A549 (cell line): ENCODE measurements at regions of chr6 and their contacts with region 1.

Region 1: GRCh38 chr6:26183581-26184366 is 96.5 kb downstream of the HFE start:
- DNase-seq: peak in 1 of 2 experiments; percentile 84
- ATAC-seq: peak; percentile 80 to 81
- H3K4me3 ChIP-seq: peak overlapping the region; percentile 43
- H3K27ac ChIP-seq: peak overlapping the region; percentile 58 to 87
- H3K4me1 ChIP-seq: peaks cover 13% of the 10 kb centered on the region; the same call in 2 of the 3 replicates
- CTCF ChIP-seq: no peak
- EP300 ChIP-seq: no peak
- POLR2A ChIP-seq: peak; percentile 44
- RAD21 ChIP-seq: no peak

Region 2: GRCh38 chr6:26172496-26172958 is 11.2 kb before region 1 on chr6:
- CTCF ChIA-PET with region 1: interaction called, 5 read pairs
- POLR2A ChIA-PET with region 1: interaction called, 16 read pairs
- DNase-seq: no peak
- ATAC-seq: peak; percentile 61 to 64; a peak in 4 of 6 replicates
- H3K4me3 ChIP-seq: peak overlapping the region; percentile 57
- H3K27ac ChIP-seq: peak overlapping the region; percentile 85 to 89
- H3K4me1 ChIP-seq: peaks cover 16% of the 10 kb centered on the region; the same call in 2 of the 3 replicates
- CTCF ChIP-seq: no peak
- EP300 ChIP-seq: no peak
- POLR2A ChIP-seq: no peak
- RAD21 ChIP-seq: no peak

Region 3: GRCh38 chr6:26196846-26197648 is 13.3 kb after region 1 on chr6:
- CTCF ChIA-PET with region 1: interaction called, 13 read pairs
- POLR2A ChIA-PET with region 1: interaction called, 14 read pairs
- DNase-seq: no peak
- ATAC-seq: no peak
- H3K4me3 ChIP-seq: no peak overlapping the region
- H3K27ac ChIP-seq: peak overlapping the region in 1 of 2 experiments; percentile 90; a peak in 3 of 6 replicates
- H3K4me1 ChIP-seq: no peaks in the 10 kb centered on the region; the same call in 2 of the 3 replicates
- CTCF ChIP-seq: no peak
- EP300 ChIP-seq: no peak
- POLR2A ChIP-seq: no peak
- RAD21 ChIP-seq: no peak

Region 4: DNA sequence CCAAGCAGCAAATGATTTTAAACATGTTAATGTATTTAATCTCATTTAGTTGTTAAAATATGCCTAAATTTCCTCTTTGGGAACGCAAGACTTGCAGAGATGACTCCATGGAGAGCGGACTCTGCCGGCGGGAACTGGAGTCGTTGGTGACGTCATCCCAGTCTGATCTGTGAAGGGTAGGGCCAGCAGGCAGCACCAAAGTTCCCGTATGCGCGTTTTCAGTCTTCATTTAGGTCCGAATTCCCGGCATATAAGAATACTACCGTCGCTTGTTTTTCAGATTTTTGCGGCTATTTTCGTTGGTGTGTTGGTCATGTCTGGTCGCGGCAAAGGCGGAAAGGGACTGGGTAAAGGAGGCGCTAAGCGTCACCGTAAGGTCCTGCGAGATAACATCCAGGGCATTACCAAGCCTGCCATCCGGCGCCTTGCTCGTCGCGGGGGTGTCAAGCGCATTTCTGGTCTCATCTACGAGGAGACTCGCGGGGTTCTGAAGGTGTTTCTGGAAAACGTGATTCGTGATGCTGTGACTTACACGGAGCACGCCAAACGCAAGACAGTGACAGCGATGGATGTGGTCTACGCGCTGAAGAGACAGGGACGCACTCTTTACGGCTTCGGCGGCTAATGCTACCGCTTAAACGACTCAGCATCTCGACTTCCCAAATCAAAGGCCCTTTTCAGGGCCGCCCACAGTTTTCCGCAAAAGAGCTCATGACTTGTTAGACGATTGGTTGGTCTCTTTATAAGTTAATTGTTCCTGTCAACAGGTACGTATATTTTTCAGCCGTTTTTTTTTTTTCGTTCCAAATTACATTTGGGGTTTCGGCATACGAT is 20.8 kb after region 1 on chr6:
- CTCF ChIA-PET with region 1: interaction called, 13 read pairs
- POLR2A ChIA-PET with region 1: interaction called, 14 read pairs
- DNase-seq: peak; percentile 92 to 97
- ATAC-seq: peak; percentile 83
- H3K4me3 ChIP-seq: peak overlapping the region; percentile 81
- H3K27ac ChIP-seq: peak overlapping the region; percentile 88 to 97
- H3K4me1 ChIP-seq: peaks cover 14% of the 10 kb centered on the region; the same call in 2 of the 3 replicates
- CTCF ChIP-seq: no peak
- EP300 ChIP-seq: peak; percentile 41 to 57; a peak in 2 of 5 replicates
- POLR2A ChIP-seq: peak; percentile 95
- RAD21 ChIP-seq: no peak

Region 5: DNA sequence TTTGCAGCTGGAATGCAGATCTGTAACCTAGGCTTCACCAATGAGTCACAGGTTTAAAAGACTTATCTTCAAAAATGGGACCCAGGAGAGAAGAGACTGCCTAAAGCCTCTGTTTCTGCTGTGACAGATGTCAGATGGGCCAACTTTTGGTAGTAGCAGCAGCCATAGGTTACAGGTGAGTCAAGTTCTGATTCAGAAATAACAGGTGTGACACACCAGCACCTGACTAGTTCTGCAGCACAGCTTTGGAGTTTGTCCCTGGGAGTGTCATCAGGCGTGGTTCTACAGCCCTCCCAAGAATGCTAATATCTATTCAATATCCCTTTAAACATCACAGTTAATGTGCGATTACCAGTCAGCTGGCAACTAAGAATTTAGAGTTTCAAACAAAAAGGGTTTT is 59.4 kb after region 1 on chr6:
- CTCF ChIA-PET with region 1: no interaction called
- POLR2A ChIA-PET with region 1: no interaction called
- DNase-seq: no peak
- ATAC-seq: no peak
- H3K4me3 ChIP-seq: no peak overlapping the region
- H3K27ac ChIP-seq: no peak overlapping the region
- H3K4me1 ChIP-seq: peaks cover 7% of the 10 kb centered on the region; the same call in 1 of the 3 replicates
- CTCF ChIP-seq: no peak
- EP300 ChIP-seq: no peak
- POLR2A ChIP-seq: no peak
- RAD21 ChIP-seq: no peak

Region 6: DNA sequence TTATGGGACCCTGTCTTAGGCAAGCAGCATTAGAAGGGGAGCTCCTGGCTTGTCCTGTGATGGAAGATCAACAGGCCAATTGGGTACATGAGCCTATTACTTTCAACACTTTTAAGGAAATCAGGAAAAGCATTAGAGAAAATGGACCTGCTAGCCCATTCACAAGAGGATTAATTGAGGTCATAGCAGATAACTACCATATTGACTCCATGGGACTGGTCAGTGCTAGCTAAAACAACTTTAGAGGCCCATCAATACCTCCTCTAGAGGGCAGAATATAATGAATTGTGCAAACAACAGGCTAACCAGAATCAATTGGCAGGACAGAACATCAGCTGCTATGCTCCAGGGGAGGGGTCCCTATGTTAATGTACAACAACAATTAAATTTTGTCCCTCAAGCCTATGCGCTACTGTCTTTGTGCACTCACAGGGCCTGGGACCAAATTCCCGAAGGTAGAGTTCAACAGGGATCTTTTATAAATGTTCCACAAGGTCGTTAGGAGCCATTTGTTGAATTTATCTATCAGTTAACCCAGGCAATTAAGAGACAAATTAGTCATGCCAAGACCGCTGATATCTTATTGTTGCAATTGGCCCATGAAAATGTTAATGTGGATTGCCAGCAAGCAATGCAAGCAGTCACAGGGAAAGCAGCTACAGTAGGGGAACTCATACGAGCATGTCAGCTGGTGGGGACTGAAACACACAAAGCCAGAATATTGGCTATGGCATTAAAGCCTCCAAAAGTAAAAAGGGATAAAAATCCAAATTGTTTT is 74.6 kb after region 1 on chr6:
- CTCF ChIA-PET with region 1: no interaction called
- POLR2A ChIA-PET with region 1: no interaction called
- DNase-seq: no peak
- ATAC-seq: no peak; a peak in 1 of 6 replicates
- H3K4me3 ChIP-seq: no peak overlapping the region
- H3K27ac ChIP-seq: no peak overlapping the region
- H3K4me1 ChIP-seq: no peaks in the 10 kb centered on the region
- CTCF ChIP-seq: no peak
- EP300 ChIP-seq: no peak
- POLR2A ChIP-seq: no peak
- RAD21 ChIP-seq: no peak

Region 7: GRCh38 chr6:26272171-26272637 is 88.4 kb after region 1 on chr6:
- CTCF ChIA-PET with region 1: no interaction called
- POLR2A ChIA-PET with region 1: interaction called, 13 read pairs
- DNase-seq: no peak
- ATAC-seq: no peak
- H3K4me3 ChIP-seq: peak overlapping the region; percentile 77; the same call in 1 of the 3 replicates
- H3K27ac ChIP-seq: peak overlapping the region; percentile 96 to 98
- H3K4me1 ChIP-seq: peaks cover 12% of the 10 kb centered on the region
- CTCF ChIP-seq: no peak
- EP300 ChIP-seq: no peak
- POLR2A ChIP-seq: no peak
- RAD21 ChIP-seq: no peak

Region 8: GRCh38 chr6:26285143-26286134 is 101.7 kb after region 1 on chr6:
- CTCF ChIA-PET with region 1: no interaction called
- POLR2A ChIA-PET with region 1: interaction called, 12 read pairs
- DNase-seq: peak; percentile 65 to 99
- ATAC-seq: peak; percentile 81 to 90
- H3K4me3 ChIP-seq: peak overlapping the region; percentile 64
- H3K27ac ChIP-seq: peak overlapping the region; percentile 93 to 94
- H3K4me1 ChIP-seq: peaks cover 34% of the 10 kb centered on the region
- CTCF ChIP-seq: no peak
- EP300 ChIP-seq: peak; percentile 37 to 63; a peak in 2 of 5 replicates
- POLR2A ChIP-seq: peak; percentile 92
- RAD21 ChIP-seq: no peak

Region 9: GRCh38 chr6:26351544-26351953 is 167.8 kb after region 1 on chr6:
- CTCF ChIA-PET with region 1: no interaction called
- POLR2A ChIA-PET with region 1: no interaction called
- DNase-seq: peak; percentile 70 to 94
- ATAC-seq: peak; percentile 99
- H3K4me3 ChIP-seq: no peak overlapping the region
- H3K27ac ChIP-seq: peak overlapping the region; percentile 80 to 90
- H3K4me1 ChIP-seq: peaks cover 32% of the 10 kb centered on the region
- CTCF ChIP-seq: no peak
- EP300 ChIP-seq: peak in 1 of 2 experiments; percentile 53; a peak in 1 of 5 replicates
- POLR2A ChIP-seq: no peak
- RAD21 ChIP-seq: no peak